Body of pancreas (tissue), 4 donors: ENCODE measurements at regions of chr1 and their contacts with region 1.

Region 1: GRCh38 chr1:109923131-109923945 is 12.7 kb downstream of the CSF1 start:
- DNase-seq: peak in 1 of 4 donors; percentile 38
- ATAC-seq: no peak
- H3K4me3 ChIP-seq: no peak overlapping the region
- H3K27ac ChIP-seq: no peak overlapping the region
- H3K4me1 ChIP-seq: peaks cover 16% of the 10 kb centered on the region
- H3K27me3 ChIP-seq: no peaks in the 10 kb centered on the region
- CTCF ChIP-seq: peak; percentile 15 to 45 (median 39)
- POLR2A ChIP-seq: no peak

Region 2: DNA sequence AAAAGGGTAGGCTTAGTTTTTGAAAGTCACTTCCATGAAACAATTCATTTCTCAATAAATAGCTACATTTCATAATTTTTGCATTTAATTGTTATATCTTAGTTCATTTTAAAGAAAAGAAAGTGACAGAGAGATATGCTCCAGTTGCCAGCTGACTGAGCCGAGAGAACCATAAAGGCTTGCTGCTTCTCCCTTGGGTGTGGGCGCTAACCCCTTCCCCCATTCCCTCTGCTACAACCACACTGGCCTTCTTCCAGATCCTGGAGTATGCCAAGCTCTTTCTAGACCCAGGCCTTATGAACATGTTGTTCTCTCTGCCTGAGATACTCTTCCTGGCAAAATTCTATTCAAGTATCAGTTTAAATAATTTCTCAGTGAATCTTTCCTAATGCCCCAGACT is 537.9 kb before region 1 on chr1:
- intact Hi-C with region 1: no loop called
- DNase-seq: peak; percentile 47 to 66 (median 55)
- ATAC-seq: peak; percentile 53
- H3K4me3 ChIP-seq: no peak overlapping the region
- H3K27ac ChIP-seq: no peak overlapping the region
- H3K4me1 ChIP-seq: peaks cover 35% of the 10 kb centered on the region
- H3K27me3 ChIP-seq: no peaks in the 10 kb centered on the region
- CTCF ChIP-seq: no peak
- POLR2A ChIP-seq: no peak

Region 3: DNA sequence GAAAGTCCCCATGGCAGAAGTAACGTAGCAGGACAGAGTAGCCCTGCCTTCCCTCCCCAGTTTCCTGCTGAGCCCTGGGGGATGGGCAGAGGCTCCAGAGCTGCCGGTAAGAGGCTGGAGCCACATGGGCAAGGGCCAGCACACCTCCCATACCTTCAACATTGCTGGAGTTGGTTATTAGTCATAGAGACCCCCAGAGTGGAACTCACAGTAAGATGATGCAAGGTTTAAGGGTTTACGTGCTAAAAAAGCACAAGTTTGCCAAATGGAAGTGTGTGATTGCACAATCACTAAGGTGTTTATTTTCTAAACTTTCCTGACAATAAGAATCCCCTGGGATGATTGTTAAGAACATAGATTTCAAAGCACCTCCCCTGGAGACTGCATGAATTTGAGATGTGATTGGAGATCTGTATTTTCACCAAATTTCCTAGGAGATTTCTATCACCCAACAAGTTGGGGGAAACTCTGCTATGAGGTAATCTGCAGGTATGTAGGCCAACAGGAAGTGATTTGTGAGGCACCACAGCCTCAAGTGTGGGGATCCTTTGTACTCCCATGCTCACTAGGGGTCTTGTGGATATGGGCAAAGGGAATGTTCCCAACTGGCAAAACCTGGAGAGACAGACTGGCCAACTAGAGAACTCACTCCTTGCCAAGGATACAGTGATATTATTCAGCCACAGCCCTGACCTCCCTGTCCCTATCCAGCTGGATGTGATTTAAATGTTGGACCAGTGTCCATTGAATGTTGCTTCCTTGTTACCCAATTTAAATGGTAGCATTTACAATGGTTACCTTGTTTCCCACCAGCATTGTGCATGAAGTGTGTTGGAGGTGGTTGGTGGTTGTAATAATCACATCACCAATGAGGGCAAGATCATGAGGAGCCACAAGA is 49.8 kb before region 1 on chr1:
- intact Hi-C with region 1: no loop called
- DNase-seq: peak in 1 of 4 donors; percentile 21
- ATAC-seq: peak; percentile 65
- H3K4me3 ChIP-seq: no peak overlapping the region
- H3K27ac ChIP-seq: peak overlapping the region in 2 of 4 donors; percentile 52 to 58
- H3K4me1 ChIP-seq: peaks cover 19% of the 10 kb centered on the region
- H3K27me3 ChIP-seq: no peaks in the 10 kb centered on the region
- CTCF ChIP-seq: no peak
- POLR2A ChIP-seq: no peak

Region 4: GRCh38 chr1:109979489-109980091 is 56.3 kb after region 1 on chr1:
- intact Hi-C with region 1: loop called (anchors 10 kb)
- DNase-seq: no peak
- ATAC-seq: no peak
- H3K4me3 ChIP-seq: no peak overlapping the region
- H3K27ac ChIP-seq: no peak overlapping the region
- H3K4me1 ChIP-seq: peaks cover 22% of the 10 kb centered on the region
- H3K27me3 ChIP-seq: no peaks in the 10 kb centered on the region
- CTCF ChIP-seq: no peak
- POLR2A ChIP-seq: no peak